A549 (cell line): ENCODE measurements at regions of chr6 and their contacts with region 1.

Region 1: GRCh38 chr6:89311853-89312531 is 3.1 kb downstream of the GABRR2 start:
- DNase-seq: no peak
- ATAC-seq: peak; percentile 13 to 55; a peak in 3 of 6 replicates
- H3K4me3 ChIP-seq: no peak overlapping the region
- H3K27ac ChIP-seq: no peak overlapping the region
- H3K4me1 ChIP-seq: no peaks in the 10 kb centered on the region
- CTCF ChIP-seq: 0 out of 3 replicates have a peak, but pooled peaks have one; percentile 18
- EP300 ChIP-seq: no peak
- POLR2A ChIP-seq: no peak
- RAD21 ChIP-seq: peak; percentile 33 to 35; a peak in 2 of 5 replicates

Region 2: DNA sequence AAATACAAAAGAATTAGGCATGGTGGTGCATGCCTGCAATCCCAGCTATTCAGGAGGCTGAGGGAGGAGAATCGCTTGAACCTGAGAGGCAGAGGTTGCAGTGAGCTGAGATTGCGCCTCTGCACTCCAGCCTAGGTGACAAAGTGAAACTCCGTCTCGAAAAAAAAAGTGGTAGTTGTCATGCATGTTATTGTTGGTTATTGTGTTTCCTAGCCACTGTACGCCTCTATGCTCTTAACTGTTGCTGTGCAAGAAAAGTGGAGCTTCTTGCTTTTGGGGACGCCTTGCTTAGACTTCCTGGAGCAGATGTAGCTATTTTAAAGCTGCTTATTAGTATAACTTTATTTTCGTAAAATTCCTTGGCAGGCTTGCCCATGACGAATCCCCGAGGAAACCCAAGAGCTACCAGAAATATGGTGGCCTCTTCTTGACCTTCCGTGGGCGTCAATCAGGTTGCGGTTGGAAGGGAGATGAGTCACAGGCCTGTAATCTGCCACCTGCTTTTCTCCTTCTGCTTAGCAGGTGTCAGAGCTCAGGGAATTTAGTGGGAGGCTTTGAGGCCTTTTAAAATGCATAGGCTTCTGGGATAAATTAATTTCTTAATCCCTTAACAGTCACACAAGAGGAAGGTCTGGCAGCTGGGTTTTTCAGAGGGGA is 14.2 kb before region 1 on chr6:
- CTCF ChIA-PET with region 1: interaction called, 13 read pairs
- POLR2A ChIA-PET with region 1: no interaction called
- DNase-seq: peak; percentile 64 to 76
- ATAC-seq: peak; percentile 81 to 91
- H3K4me3 ChIP-seq: no peak overlapping the region
- H3K27ac ChIP-seq: peak overlapping the region in 1 of 2 experiments; percentile 71; a peak in 3 of 6 replicates
- H3K4me1 ChIP-seq: peaks cover 12% of the 10 kb centered on the region
- CTCF ChIP-seq: no peak
- EP300 ChIP-seq: no peak
- POLR2A ChIP-seq: no peak
- RAD21 ChIP-seq: no peak

Region 3: DNA sequence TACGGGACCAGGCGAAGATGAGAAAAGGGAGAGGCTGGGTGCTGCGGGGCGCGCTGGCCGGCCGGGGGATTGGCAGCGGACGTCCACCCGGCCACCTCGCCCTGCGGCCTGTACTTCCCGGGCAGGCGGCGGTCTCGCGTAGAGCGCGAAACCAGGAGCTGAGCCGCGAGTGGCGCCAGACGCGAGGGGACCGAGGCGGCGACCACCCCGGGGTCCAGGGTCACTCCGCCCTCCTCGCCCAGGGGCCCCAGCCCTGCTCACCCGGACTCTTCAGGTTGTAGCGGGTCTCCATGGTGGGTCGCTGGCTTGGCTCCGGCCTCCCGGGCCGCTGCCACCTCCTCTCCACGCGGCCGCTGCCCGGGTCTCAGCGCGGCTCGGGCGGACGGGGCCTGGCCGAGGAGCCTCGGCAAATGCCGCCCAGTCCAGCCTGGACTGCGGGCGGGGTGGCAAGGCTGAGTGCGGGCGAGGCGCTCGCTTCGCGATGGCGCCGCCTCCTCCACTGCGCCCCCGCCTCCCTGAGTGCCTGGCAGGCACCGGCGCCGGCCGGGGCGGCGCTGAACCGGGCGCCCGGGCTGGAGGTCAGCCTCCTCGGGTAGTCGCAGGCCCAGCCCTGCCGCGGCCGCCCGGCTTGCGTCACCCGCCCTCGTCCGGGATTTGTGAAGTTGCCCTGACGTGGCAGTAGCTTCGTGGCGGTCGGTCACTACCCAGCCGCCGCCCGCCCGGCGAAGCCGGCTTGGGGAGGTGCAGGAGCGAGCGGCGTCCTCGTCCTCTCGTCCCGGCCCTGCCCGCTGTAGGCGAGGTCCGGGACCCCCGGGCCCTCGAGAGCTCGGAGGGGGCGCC is 40.5 kb after region 1 on chr6 and contains the start of gene UBE2J1:
- CTCF ChIA-PET with region 1: interaction called, 18 read pairs
- POLR2A ChIA-PET with region 1: interaction called, 5 read pairs
- DNase-seq: peak; percentile 48 to 86
- ATAC-seq: peak; percentile 96 to 98
- H3K4me3 ChIP-seq: peak within 1 kb of the TSS; percentile 72
- H3K27ac ChIP-seq: peak within 1 kb of the TSS; percentile 94 to 98
- H3K4me1 ChIP-seq: peaks cover 15% of the 10 kb centered on the region; the same call in 1 of the 3 replicates
- CTCF ChIP-seq: no peak
- EP300 ChIP-seq: no peak
- POLR2A ChIP-seq: peak; percentile 59
- RAD21 ChIP-seq: no peak
- polyA plus RNA-seq, gene UBE2J1: 26.6 and 32.7 TPM in 2 replicates

Region 4: GRCh38 chr6:89360415-89360999 is 48.5 kb after region 1 on chr6:
- CTCF ChIA-PET with region 1: interaction called, 10 read pairs
- POLR2A ChIA-PET with region 1: interaction called, 5 read pairs
- DNase-seq: no peak
- ATAC-seq: no peak
- H3K4me3 ChIP-seq: no peak overlapping the region
- H3K27ac ChIP-seq: no peak overlapping the region
- H3K4me1 ChIP-seq: no peaks in the 10 kb centered on the region
- CTCF ChIP-seq: no peak
- EP300 ChIP-seq: no peak
- POLR2A ChIP-seq: no peak
- RAD21 ChIP-seq: no peak

Region 5: DNA sequence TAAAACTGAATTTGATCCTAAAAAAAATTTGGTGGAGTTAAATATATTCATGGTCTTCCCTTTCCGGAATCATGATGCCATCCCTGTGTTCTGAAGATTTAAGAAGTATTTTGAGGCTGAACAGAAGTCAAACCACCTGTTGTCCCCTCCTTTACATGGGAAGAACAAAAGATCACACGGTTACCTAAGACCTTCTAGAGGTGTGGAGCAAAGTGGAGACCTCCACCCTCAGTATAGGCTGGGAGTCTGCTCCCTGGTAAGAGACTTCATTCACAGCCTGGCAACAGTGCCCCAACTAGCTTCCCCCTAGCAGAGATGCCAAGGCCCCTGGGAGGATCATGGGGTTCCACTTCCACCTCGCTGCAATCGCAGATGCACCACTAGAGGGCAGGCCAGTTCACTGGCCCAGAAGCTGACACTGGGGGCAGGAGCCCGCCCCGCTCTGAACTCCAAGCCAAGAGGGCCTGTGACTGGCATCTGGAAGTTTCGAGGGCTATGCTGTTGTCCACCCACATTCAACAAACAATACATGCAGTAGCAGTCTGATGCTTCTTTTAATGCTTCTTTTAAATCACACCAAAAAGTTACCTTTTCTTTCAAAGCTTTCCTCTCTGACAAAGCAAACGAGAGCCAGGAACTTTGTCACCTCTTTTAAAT is 60.0 kb after region 1 on chr6:
- CTCF ChIA-PET with region 1: interaction called, 11 read pairs
- POLR2A ChIA-PET with region 1: no interaction called
- DNase-seq: peak; percentile 49 to 62
- ATAC-seq: peak; percentile 94 to 98
- H3K4me3 ChIP-seq: no peak overlapping the region
- H3K27ac ChIP-seq: no peak overlapping the region
- H3K4me1 ChIP-seq: no peaks in the 10 kb centered on the region
- CTCF ChIP-seq: peak; percentile 72
- EP300 ChIP-seq: no peak
- POLR2A ChIP-seq: no peak
- RAD21 ChIP-seq: peak; percentile 48 to 59; a peak in 4 of 5 replicates